Astrocyte of the cerebellum (primary cell): ENCODE measurements at regions of chr14 and their contacts with region 1.

Region 1: GRCh38 chr14:22865424-22866405 is 5.8 kb upstream of the LRP10 start:
- DNase-seq: no peak
- H3K4me3 ChIP-seq: no peak overlapping the region
- CTCF ChIP-seq: peak; percentile 17

Region 2: DNA sequence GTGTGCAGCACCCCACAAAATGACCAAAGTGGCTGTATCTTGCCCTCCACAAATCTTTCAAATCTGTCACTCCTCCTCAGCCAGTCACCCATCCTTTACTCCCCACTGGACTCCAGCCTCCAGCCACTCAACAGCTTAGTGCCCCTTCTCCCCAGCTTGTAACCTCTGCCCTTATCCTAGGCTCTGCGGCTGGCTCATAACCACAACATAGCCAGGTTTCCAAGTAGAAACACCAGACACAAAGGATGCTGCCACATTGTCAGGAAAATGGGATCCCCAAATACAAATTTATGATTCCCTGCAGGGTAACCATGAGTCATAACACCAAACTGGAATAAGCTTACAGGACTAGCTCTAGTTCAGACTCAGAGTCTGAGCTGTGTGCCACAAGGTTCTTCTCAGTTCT is 84.1 kb before region 1 on chr14:
- in situ Hi-C with region 1: loop called (anchors 5 kb)
- DNase-seq: peak; percentile 32
- H3K4me3 ChIP-seq: no peak overlapping the region
- CTCF ChIP-seq: no peak

Region 3: GRCh38 chr14:22802860-22803686 is 62.6 kb before region 1 on chr14:
- in situ Hi-C with region 1: no loop called
- DNase-seq: no peak
- H3K4me3 ChIP-seq: no peak overlapping the region
- CTCF ChIP-seq: no peak